ENCODE measurements at regions of chr14 and their contacts with region 1.

Region 1: DNA sequence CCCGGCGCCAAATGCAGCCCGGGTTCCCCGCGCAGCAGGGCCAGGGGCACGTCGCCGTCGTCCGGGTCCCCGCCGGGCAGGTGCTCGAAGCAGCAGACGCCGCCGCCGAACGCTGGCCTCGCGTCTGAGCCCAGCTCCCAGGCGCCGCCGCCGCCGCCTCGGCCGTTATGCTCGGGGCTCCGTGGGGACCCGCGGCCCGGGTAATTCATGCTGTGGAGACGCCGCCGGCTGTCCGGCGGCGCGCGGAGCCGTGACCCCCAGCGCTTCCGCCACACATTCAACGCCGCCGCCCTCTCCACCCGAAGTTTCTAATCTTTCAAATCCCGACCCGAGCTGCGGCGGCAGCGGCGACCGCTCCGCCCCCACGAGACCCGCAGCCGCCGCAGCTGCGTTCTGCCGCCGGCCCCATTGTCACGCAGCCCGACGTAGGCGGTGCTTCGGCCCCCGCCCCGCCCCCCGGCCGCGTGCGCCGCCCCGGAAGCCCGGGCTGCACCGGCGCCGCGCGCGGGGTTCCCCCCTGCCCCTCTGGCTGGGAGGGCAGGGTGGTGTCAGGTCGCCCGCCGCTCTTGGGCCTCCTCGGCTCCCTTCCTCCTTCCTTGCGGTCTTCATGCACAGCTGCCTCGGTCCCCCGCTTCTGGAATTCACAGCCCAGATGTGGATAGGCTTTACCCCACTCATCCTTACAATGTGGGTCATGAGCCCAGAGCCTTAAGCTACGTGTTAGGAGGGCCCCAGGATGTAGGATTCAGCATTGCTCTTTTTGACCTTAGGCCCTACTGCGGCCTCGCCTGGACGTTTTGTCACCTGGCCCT is at the start of gene DDHD1:
- DNase-seq: peak; percentile 84
- H3K4me3 Mint-ChIP-seq: peak within 1 kb of the TSS; percentile 99
- H3K27ac Mint-ChIP-seq: peak within 1 kb of the TSS; percentile 98
- H3K4me1 Mint-ChIP-seq: peaks cover 46% of the 10 kb centered on the region
- H3K27me3 Mint-ChIP-seq: no peaks in the 10 kb centered on the region

Region 2: GRCh38 chr14:53109105-53110041 is 43.7 kb before region 1 on chr14:
- CTCF ChIA-PET with region 1: interaction called, 31 read pairs
- DNase-seq: peak; percentile 83
- H3K4me3 Mint-ChIP-seq: no peak overlapping the region
- H3K27ac Mint-ChIP-seq: no peak overlapping the region
- H3K4me1 Mint-ChIP-seq: peaks cover 9% of the 10 kb centered on the region
- H3K27me3 Mint-ChIP-seq: no peaks in the 10 kb centered on the region